Left cardiac atrium (tissue), 4 donors: ENCODE measurements at regions of chr4 and their contacts with region 1.

Region 1: DNA sequence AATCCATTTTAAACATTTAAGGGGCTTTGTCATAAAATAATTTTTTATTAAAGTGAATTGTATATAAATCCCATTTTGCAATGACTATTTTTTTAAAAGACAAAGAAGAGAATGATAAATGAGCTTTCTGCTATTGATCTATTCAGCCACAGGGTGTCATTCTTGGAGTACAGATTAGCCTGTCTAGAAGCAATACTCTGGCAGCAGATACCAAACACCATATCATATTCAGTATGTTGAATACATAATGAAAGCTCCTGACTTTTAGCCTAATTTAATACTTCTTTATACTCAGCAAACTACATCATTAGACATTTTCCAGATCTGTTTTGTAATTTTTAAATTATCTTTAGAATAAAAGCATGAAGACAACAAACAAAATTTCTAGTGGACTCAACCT is 496.3 kb downstream of the PDGFC start:
- DNase-seq: no peak
- ATAC-seq: peak; percentile 72 to 83

Region 2: DNA sequence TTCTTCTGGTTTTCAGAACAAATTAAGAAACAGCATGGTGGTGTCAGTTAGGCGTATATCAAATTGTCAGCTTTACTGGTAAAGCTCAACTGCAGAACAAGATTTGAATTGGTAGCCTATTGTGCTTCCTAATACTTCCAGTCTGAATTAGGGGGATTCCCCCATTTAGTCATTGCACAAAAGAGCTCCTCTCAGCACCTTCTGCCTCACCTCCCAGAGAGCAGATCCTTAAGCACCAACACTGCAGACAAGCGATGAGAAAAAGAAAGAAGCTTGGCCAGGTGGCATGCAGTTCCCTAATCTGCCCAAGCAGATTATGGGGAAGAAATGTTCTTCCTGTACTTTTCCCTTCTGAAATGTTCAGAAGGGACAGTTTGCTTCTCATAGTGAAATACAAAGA is 1107.7 kb before region 1 on chr4:
- intact Hi-C with region 1: no loop called
- DNase-seq: no peak
- ATAC-seq: no peak

Region 3: DNA sequence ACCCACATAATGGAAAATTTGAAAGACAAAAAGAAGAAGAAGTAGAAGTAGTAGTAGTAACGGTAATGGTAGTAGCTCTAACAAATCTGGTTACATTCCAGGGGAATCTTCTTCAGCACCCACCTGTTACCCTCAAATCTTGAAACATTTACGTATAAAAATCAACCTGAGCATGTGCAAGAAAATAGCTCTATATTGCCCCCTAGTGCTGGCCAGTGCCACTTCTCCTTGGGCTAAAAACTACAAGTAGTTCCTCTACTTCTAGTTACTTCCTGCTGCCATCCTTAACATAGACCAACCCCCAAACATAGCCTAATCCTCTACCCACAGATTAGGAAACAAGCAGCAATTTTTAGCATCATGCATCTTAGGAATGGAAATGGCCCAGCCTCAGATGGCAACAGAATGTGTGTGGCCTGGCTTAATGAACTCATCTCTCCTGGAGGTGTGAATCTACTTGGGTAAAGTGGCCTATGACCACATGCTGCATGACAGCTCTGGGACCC is 493.2 kb after region 1 on chr4:
- intact Hi-C with region 1: loop called in 1 of 2 experiments (anchors 5 kb)
- DNase-seq: peak; percentile 51
- ATAC-seq: peak; percentile 28 to 60

Region 4: GRCh38 chr4:157978680-157979361 is 1503.5 kb after region 1 on chr4:
- intact Hi-C with region 1: loop called in 1 of 2 experiments (anchors 10 kb)
- DNase-seq: peak; percentile 39
- ATAC-seq: peak; percentile 78 to 81